Gastrocnemius medialis (tissue), 4 donors: ENCODE measurements at regions of chr1 and their contacts with region 1.

Region 1: GRCh38 chr1:15736038-15736889 is at the start of gene SLC25A34:
- DNase-seq: peak; percentile 93 to 97
- ATAC-seq: peak; percentile 76 to 80
- H3K4me3 ChIP-seq: peak within 1 kb of the TSS; percentile 20 to 47 (median 32)
- H3K27ac ChIP-seq: peak within 1 kb of the TSS; percentile 86 to 96 (median 94)
- H3K4me1 ChIP-seq: peaks cover 42 to 47% of the 10 kb centered on the region in 2 donors
- H3K27me3 ChIP-seq: no peaks in the 10 kb centered on the region
- CTCF ChIP-seq: peak in 1 of 5 experiments; percentile 13
- POLR2A ChIP-seq: peak; percentile 81 to 85
- total RNA-seq, gene SLC25A34: 7.8 to 17.2 (median 13.8) TPM

Region 2: GRCh38 chr1:15578921-15579682 is 157.2 kb before region 1 on chr1:
- in situ Hi-C with region 1: loop called in 1 of 4 experiments (anchors 25 kb)
- intact Hi-C with region 1: loop called (anchors 5 kb)
- DNase-seq: no peak
- ATAC-seq: peak in 1 of 2 donors; percentile 13
- H3K4me3 ChIP-seq: peak overlapping the region in 3 of 4 donors; percentile 10 to 31 (median 26)
- H3K27ac ChIP-seq: peak overlapping the region; percentile 88 to 95 (median 92)
- H3K4me1 ChIP-seq: peaks cover 27 to 38% of the 10 kb centered on the region in 2 donors
- H3K27me3 ChIP-seq: no peaks in the 10 kb centered on the region
- CTCF ChIP-seq: no peak
- POLR2A ChIP-seq: no peak

Region 3: DNA sequence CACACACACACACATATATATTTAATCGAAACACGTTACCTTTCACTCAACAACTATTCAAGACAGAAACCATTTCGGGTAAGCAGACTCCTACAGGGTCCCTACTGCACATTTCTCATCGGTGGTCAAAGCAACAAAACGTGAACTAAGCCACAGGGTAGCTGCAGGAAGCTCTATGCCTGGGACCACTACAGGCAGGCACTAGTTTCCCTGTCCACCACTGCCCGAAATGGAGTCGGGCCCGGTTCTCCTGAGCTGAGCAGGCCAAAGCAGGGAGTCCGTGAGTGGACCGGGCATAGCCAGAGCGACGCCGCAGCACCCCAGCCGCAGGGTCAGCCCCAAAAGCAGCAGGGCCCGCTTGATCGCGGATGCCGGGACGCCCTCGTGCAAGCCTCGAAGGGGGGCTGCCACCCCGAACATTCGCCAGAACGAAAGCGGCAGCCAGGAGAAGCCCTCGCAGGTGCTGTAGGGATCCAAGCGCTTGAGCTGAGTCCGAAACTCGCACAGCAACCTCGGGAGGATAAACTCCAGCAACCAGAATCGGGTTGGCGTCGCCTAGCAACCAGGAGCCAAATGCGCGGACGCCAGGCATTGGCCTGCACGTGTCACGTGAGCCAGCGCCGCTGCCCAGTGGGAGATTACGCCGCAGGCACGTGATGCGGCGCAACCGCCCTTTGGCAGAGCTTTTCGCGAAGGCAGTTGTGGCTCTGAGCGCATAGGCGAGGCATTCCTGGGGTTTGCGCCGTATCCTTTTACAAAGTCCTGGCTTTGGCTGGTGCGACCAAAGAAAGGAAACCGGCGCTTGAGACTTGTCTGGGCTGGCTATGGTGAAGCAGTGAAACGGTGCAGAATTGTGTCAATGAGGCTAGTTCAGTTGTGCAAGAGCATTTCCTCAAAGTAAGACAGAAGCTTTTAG is 133.0 kb before region 1 on chr1:
- in situ Hi-C with region 1: loop called in 2 of 4 experiments (anchors 10 to 25 kb)
- intact Hi-C with region 1: loop called (anchors 5 kb)
- DNase-seq: peak; percentile 98
- ATAC-seq: peak; percentile 88 to 90
- H3K4me3 ChIP-seq: peak overlapping the region; percentile 58 to 86 (median 72)
- H3K27ac ChIP-seq: peak overlapping the region; percentile 82 to 93 (median 86)
- H3K4me1 ChIP-seq: peaks cover 19 to 31% of the 10 kb centered on the region in 2 donors
- H3K27me3 ChIP-seq: no peaks in the 10 kb centered on the region
- CTCF ChIP-seq: no peak
- POLR2A ChIP-seq: peak; percentile 71 to 89

Region 4: GRCh38 chr1:15714406-15715136 is 21.7 kb before region 1 on chr1:
- in situ Hi-C with region 1: no loop called
- intact Hi-C with region 1: loop called (anchors 1 kb)
- DNase-seq: peak; percentile 86 to 87
- ATAC-seq: peak; percentile 76 to 80
- H3K4me3 ChIP-seq: peak overlapping the region in 1 of 4 donors; percentile 2
- H3K27ac ChIP-seq: peak overlapping the region; percentile 93 to 96 (median 96)
- H3K4me1 ChIP-seq: peaks cover 83 to 95% of the 10 kb centered on the region in 2 donors
- H3K27me3 ChIP-seq: no peaks in the 10 kb centered on the region
- CTCF ChIP-seq: no peak
- POLR2A ChIP-seq: peak; percentile 43 to 74

Region 5: GRCh38 chr1:15820478-15820877 is 84.2 kb after region 1 on chr1:
- in situ Hi-C with region 1: no loop called
- intact Hi-C with region 1: no loop called
- DNase-seq: no peak
- ATAC-seq: no peak
- H3K4me3 ChIP-seq: no peak overlapping the region
- H3K27ac ChIP-seq: no peak overlapping the region
- H3K4me1 ChIP-seq: peaks cover 0 to 7% of the 10 kb centered on the region in 2 donors
- H3K27me3 ChIP-seq: no peaks in the 10 kb centered on the region
- CTCF ChIP-seq: no peak
- POLR2A ChIP-seq: no peak